Left ventricle myocardium superior (tissue), 1 donor: ENCODE measurements at regions of chr2 and their contacts with region 1.

Region 1: GRCh38 chr2:37877457-37878315 is 47.4 kb upstream of the RMDN2 start:
- DNase-seq: no peak
- ATAC-seq: peak; percentile 64

Region 2: GRCh38 chr2:37394263-37394662 is 483.4 kb before region 1 on chr2:
- intact Hi-C with region 1: loop called (anchors 1 kb)
- DNase-seq: no peak
- ATAC-seq: no peak